ENCODE measurements at regions of chr19 and their contacts with region 1.

Region 1: GRCh38 chr19:459724-460511 is 915 bp downstream of the SHC2 start:
- DNase-seq: no peak
- H3K4me3 ChIP-seq: peak overlapping the region; percentile 46
- CTCF ChIP-seq: no peak

Region 2: DNA sequence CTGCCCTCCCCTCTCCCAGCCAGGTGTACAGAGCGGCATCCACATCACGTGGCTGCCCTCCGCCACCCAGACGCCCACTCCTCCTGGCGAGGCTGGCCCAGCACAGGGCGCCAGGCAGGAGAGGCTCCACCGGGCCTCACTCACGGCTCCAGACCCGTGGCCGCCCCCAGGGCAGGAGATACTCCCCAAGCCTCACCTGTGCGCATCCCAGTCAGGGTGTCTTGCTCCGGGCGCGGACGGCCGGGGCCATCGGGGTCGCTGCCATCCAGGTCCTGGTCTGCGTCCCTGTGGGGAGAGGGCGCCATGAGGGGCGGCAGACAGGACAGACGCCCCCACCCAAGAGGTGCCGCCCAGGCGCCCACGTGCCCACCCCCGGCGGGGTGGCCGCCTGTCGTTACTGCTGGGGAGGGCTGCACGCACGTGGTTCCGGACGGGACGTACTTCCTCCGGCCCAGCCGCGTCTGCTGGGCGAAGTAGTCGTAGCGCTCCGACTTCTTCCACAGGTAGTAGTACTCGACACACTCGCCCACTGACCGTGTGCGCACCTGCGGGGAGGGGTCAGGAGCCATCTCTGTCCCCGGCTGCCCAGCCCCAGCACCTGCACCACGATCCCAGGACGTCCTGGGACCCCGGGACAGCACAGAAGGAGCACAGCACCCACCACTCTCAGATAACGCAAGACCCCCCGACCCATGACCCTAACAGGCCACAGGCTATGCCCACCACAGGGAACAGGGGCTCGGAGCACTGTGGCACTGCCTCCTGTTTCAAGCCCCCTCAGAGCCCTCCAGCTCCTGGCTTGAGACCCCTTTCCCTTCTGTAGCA is 151.3 kb before region 1 on chr19:
- in situ Hi-C with region 1: loop called (anchors 10 kb)
- DNase-seq: no peak
- H3K4me3 ChIP-seq: no peak overlapping the region
- CTCF ChIP-seq: no peak